K562 (cell line): ENCODE measurements at regions of chr2 and their contacts with region 1.

Region 1: DNA sequence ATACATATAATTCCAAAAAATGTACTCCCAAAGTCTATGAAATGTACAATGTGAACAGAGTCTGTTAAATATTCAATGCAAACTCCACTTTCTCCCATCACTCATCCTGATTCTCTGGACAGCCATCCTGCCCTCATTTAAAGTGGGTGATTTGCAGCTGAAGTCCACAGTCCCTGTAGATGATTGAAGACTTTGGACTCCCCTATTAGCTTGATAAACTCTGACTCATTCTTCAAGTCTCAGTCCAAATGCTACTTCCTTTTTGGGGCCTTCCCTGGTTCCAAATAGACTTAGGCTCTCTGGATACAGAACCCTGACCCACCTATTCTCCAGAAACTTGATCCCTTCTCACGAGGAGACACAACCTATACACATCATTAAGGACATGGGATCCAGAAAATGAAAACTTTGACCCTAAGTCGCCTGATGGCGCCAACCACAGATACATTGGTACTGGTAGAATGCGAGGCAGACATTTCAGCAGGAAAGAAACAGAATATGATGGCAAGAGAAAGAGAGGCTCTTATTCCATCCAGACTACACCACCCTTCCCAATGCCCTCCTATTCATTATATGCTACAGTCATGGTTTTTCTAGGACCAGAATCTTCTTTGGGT is 122.7 kb downstream of the VIT start:
- DNase-seq: peak in 1 of 4 experiments; percentile 24
- ATAC-seq: peak; percentile 62
- H3K4me3 ChIP-seq: no peak overlapping the region
- H3K27ac ChIP-seq: no peak overlapping the region
- H3K4me1 ChIP-seq: no peaks in the 10 kb centered on the region
- H3K27me3 ChIP-seq: peaks cover 6 to 27% of the 10 kb centered on the region in 2 experiments; a peak in 4 of 5 replicates
- CTCF ChIP-seq: peak in 2 of 3 experiments; percentile 21 to 31; a peak in 2 of 6 replicates
- EP300 ChIP-seq: no peak
- POLR2A ChIP-seq: no peak
- RAD21 ChIP-seq: peak in 1 of 2 experiments; percentile 52; a peak in 2 of 4 replicates

Region 2: DNA sequence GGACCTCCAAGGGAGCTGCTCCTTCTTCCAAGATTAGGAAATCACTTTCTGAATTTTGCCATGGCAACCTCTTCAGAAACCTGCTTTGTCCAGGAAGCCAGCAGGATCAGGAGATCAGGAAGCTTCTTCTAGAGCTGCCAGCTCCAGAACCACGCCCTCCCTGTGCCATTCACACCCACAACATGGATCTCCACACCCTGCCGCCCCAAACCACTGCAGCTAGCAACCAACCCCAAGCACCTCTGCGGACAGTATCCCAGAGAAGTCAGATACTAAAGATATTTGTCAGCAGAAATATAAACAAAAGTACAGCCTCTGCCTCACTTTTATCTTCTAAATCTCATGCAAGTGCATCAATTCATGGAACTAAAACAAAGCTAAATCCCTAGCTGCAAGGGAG is 16.3 kb before region 1 on chr2:
- CTCF ChIA-PET with region 1: no interaction called
- POLR2A ChIA-PET with region 1: interaction called, 4 read pairs
- in situ Hi-C with region 1: no loop called
- intact Hi-C with region 1: loop called (anchors 2 kb)
- DNase-seq: no peak
- ATAC-seq: no peak
- H3K4me3 ChIP-seq: no peak overlapping the region
- H3K27ac ChIP-seq: no peak overlapping the region
- H3K4me1 ChIP-seq: peaks cover 0 to 4% of the 10 kb centered on the region in 2 experiments; a peak in 2 of 5 replicates
- H3K27me3 ChIP-seq: peaks cover 18 to 21% of the 10 kb centered on the region in 2 experiments; a peak in 4 of 5 replicates
- CTCF ChIP-seq: no peak
- EP300 ChIP-seq: no peak
- POLR2A ChIP-seq: no peak
- RAD21 ChIP-seq: no peak

Region 3: GRCh38 chr2:37005118-37005868 is 186.1 kb after region 1 on chr2:
- CTCF ChIA-PET with region 1: interaction called, 6 read pairs
- POLR2A ChIA-PET with region 1: no interaction called
- in situ Hi-C with region 1: no loop called
- intact Hi-C with region 1: loop called (anchors 1 kb)
- DNase-seq: peak in 3 of 4 experiments; percentile 12 to 59 (median 15)
- ATAC-seq: peak; percentile 97
- H3K4me3 ChIP-seq: no peak overlapping the region
- H3K27ac ChIP-seq: no peak overlapping the region
- H3K4me1 ChIP-seq: peaks cover 0 to 2% of the 10 kb centered on the region in 2 experiments; a peak in 1 of 5 replicates
- H3K27me3 ChIP-seq: no peaks in the 10 kb centered on the region
- CTCF ChIP-seq: peak; percentile 70 to 82 (median 74)
- EP300 ChIP-seq: no peak
- POLR2A ChIP-seq: no peak
- RAD21 ChIP-seq: peak; percentile 76 to 91